PC-3 (cell line): ENCODE measurements at regions of chr22 and their contacts with region 1.

Region 1: GRCh38 chr22:50691521-50691920 is 18.9 kb downstream of the SHANK3 start:
- DNase-seq: peak; percentile 62
- ATAC-seq: 0 out of 2 replicates have a peak, but pooled peaks have one; percentile 31
- H3K4me3 ChIP-seq: no peak overlapping the region
- H3K27ac ChIP-seq: no peak overlapping the region
- H3K4me1 ChIP-seq: no peaks in the 10 kb centered on the region
- H3K27me3 ChIP-seq: no peaks in the 10 kb centered on the region
- CTCF ChIP-seq: peak; percentile 80

Region 2: DNA sequence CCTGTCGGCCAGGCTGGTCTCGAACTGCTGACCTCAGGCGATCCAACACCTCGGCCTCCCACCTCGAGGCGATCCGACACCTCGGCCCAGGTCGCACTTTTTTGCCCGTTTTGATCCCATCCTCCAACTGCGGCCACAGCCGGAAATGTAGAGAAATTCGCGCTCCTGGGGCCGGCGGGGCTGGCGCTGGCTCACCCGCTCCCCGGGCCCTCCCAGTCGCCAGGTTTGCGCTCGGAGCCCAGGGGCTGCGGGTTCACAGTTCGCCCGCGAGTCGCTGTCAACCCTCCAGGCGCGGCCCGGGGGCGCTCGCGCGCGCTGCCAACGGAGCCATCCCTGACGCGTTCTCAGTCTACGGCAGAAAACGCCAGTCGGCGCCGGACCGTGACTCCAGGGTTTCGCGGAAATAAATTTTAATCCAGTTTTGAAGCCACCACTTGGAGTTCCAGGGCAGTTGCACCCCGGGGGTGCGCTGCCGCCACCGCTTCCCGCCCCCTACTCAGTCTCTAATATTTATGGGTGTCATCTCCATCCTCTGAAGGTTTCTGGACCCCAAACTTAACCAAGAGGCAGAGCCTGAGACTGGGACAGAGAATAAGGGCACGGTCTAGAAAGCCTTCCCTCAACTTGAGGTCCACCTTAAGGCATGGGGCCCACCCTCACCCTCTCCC is 147.3 kb before region 1 on chr22:
- CTCF ChIA-PET with region 1: no interaction called
- POLR2A ChIA-PET with region 1: no interaction called
- intact Hi-C with region 1: no loop called
- DNase-seq: no peak
- ATAC-seq: no peak
- H3K4me3 ChIP-seq: no peak overlapping the region
- H3K27ac ChIP-seq: no peak overlapping the region
- H3K4me1 ChIP-seq: peaks cover 16% of the 10 kb centered on the region
- H3K27me3 ChIP-seq: no peaks in the 10 kb centered on the region
- CTCF ChIP-seq: no peak

Region 3: GRCh38 chr22:50568599-50569001 is 122.9 kb before region 1 on chr22:
- CTCF ChIA-PET with region 1: no interaction called
- POLR2A ChIA-PET with region 1: no interaction called
- intact Hi-C with region 1: no loop called
- DNase-seq: no peak
- ATAC-seq: no peak
- H3K4me3 ChIP-seq: no peak overlapping the region
- H3K27ac ChIP-seq: no peak overlapping the region
- H3K4me1 ChIP-seq: peaks cover 7% of the 10 kb centered on the region
- H3K27me3 ChIP-seq: no peaks in the 10 kb centered on the region
- CTCF ChIP-seq: no peak

Region 4: GRCh38 chr22:50627642-50628542 is 63.6 kb before region 1 on chr22 and contains the start of gene ARSA:
- CTCF ChIA-PET with region 1: no interaction called
- POLR2A ChIA-PET with region 1: no interaction called
- intact Hi-C with region 1: loop called (anchors 2 kb)
- DNase-seq: peak; percentile 79
- ATAC-seq: peak; percentile 89
- H3K4me3 ChIP-seq: peak within 1 kb of the TSS; percentile 92
- H3K27ac ChIP-seq: no peak within 1 kb of the TSS
- H3K4me1 ChIP-seq: peaks cover 13% of the 10 kb centered on the region
- H3K27me3 ChIP-seq: no peaks in the 10 kb centered on the region
- CTCF ChIP-seq: peak; percentile 36; the same call in 1 of the 2 replicates
- total RNA-seq, gene ARSA: 11.3 and 16.7 TPM in 2 replicates

Region 5: DNA sequence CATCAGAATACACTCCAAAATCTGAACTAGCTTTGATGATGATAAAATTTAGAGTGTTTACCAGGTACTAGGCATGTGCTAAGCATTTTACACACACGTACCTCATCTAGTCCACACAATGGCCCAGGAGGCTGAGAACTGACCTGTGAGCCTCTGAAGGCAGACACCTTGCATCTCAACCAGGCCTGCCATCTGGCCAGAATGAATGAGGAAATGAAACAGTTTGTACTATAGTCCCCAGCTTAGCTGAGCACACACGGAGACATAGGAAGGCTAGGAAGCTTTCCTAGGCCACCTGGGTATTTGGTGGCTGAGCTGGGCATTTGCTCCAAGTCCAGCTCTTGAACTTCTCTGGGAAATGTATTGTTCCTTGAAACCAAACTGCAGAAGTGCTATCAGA is 25.8 kb before region 1 on chr22:
- CTCF ChIA-PET with region 1: no interaction called
- POLR2A ChIA-PET with region 1: no interaction called
- intact Hi-C with region 1: no loop called
- DNase-seq: no peak
- ATAC-seq: no peak
- H3K4me3 ChIP-seq: no peak overlapping the region
- H3K27ac ChIP-seq: no peak overlapping the region
- H3K4me1 ChIP-seq: no peaks in the 10 kb centered on the region
- H3K27me3 ChIP-seq: no peaks in the 10 kb centered on the region
- CTCF ChIP-seq: no peak